Dendritic cell treated with granulocyte-macrophage colony-stimulating factor and Interleukin-4, amounts not matched to agents 40 ng/mL and 50 ng/mL, for 4 days (primary cell): ENCODE measurements at regions of chr6 and their contacts with region 1.

Region 1: DNA sequence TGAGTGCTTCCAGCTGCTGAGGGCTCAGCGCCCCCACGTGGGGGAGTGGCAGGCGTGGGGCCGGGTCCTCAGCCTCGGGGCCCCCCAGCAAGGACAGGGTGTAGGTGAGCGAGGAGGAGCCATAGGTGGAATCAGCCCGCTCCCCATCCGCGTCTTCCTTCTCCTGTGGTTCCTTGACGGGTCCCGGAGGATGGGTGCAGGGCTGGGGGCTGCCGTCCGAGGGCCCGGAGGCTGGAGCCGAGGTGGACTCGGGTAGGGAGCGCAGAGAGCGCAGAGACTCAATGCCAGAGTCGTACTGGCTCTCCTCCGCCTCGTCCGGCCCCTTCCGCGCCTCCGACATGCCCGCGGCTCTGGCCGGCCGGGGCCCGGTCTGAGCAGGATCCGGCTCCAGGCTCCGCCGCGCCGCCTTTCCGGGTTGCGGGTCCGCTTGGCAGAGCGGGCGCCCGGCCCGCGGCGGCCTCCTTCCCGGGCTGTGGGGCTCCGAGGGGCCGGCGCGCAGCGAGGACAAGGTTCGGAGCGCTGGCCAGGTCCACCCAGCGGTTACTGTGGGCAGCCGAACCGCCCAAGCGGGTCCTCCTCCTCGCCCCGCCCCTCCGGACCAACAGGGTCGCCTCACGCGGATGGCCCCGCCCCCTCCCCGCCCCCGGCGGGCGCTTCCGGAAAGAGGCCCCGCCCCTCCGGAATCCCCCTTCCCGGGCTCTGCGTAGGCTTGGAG is at the start of gene NFKBIE:
- H3K4me3 Mint-ChIP-seq: peak within 1 kb of the TSS; percentile 97
- H3K27ac Mint-ChIP-seq: peak within 1 kb of the TSS; percentile 90
- H3K4me1 Mint-ChIP-seq: peaks cover 60% of the 10 kb centered on the region
- H3K27me3 Mint-ChIP-seq: peaks cover 24% of the 10 kb centered on the region

Region 2: DNA sequence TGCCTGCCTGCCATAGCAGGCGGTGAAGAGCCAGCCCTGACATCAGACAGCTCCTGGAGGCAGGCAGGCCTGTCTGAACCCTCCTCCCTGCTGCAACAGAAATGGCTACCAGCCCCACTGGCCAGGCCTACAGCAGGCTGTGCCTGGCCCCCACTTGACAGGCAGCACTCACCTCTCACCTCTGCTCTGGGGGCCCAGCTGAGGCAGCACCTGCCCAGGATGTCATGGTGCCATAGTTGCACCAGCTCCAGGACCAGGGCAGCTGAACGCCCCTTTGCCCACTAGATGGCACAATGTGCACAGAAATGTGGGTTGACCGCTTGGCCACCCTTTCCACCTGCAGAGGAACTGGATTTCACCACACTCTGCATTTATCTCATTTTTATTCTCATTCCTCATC is 168.6 kb before region 1 on chr6:
- intact Hi-C with region 1: loop called (anchors 5 kb)
- H3K4me3 Mint-ChIP-seq: no peak overlapping the region
- H3K27ac Mint-ChIP-seq: no peak overlapping the region
- H3K4me1 Mint-ChIP-seq: no peaks in the 10 kb centered on the region
- H3K27me3 Mint-ChIP-seq: no peaks in the 10 kb centered on the region

Region 3: GRCh38 chr6:44304282-44305199 is 39.4 kb after region 1 on chr6:
- intact Hi-C with region 1: loop called (anchors 1 kb)
- H3K4me3 Mint-ChIP-seq: no peak overlapping the region
- H3K27ac Mint-ChIP-seq: no peak overlapping the region
- H3K4me1 Mint-ChIP-seq: peaks cover 15% of the 10 kb centered on the region
- H3K27me3 Mint-ChIP-seq: peaks cover 2% of the 10 kb centered on the region

Region 4: GRCh38 chr6:44387346-44388133 is 122.4 kb after region 1 on chr6 and contains the start of gene CDC5L:
- intact Hi-C with region 1: no loop called
- H3K4me3 Mint-ChIP-seq: peak within 1 kb of the TSS; percentile 91
- H3K27ac Mint-ChIP-seq: peak within 1 kb of the TSS; percentile 98
- H3K4me1 Mint-ChIP-seq: peaks cover 33% of the 10 kb centered on the region
- H3K27me3 Mint-ChIP-seq: no peaks in the 10 kb centered on the region

Region 5: DNA sequence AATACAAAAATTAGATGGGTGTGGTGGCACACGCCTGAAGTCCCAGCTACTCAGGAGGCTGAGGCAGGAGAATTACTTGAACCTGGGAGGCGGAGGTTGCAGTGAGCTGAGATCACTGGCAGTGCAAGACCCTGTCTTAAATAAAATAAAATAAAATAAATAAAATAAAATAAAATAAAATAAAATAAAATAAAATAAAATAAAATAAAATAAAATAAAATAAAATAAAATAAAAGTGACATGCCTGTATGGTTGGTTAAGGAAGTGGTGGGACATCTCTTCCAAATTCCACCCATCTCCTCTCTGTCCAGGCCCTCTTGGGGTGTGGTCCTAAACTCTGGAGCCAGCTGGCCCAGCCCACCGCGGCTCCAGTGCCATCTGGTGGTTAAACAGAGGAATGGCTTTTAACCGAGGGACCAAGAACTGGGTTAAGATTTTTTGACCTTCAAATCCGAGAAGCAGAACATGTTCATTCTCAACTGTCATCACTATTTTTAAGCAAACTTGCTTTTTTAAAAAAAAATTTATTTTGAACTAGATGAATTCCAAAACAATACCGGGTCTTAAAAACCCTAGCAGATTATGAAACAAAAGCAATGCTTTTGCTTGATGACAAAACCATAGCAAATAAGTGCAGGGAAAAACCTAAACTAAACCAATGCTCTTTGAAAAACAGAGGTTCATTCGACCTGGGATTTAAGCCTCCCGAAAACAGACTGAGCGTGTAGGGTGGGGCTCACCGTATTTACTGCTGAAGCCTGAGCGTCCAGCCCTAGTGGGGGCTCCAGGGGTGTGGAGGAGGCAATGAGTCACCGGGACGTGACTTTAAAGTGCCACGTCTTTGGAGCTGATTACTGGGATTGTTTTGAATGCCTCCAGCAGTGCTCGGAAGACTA is 191.2 kb after region 1 on chr6:
- intact Hi-C with region 1: loop called (anchors 5 kb)
- H3K4me3 Mint-ChIP-seq: no peak overlapping the region
- H3K27ac Mint-ChIP-seq: no peak overlapping the region
- H3K4me1 Mint-ChIP-seq: peaks cover 12% of the 10 kb centered on the region
- H3K27me3 Mint-ChIP-seq: peaks cover 5% of the 10 kb centered on the region